WTC11 (cell line): ENCODE measurements at regions of chr2 and their contacts with region 1.

Region 1: DNA sequence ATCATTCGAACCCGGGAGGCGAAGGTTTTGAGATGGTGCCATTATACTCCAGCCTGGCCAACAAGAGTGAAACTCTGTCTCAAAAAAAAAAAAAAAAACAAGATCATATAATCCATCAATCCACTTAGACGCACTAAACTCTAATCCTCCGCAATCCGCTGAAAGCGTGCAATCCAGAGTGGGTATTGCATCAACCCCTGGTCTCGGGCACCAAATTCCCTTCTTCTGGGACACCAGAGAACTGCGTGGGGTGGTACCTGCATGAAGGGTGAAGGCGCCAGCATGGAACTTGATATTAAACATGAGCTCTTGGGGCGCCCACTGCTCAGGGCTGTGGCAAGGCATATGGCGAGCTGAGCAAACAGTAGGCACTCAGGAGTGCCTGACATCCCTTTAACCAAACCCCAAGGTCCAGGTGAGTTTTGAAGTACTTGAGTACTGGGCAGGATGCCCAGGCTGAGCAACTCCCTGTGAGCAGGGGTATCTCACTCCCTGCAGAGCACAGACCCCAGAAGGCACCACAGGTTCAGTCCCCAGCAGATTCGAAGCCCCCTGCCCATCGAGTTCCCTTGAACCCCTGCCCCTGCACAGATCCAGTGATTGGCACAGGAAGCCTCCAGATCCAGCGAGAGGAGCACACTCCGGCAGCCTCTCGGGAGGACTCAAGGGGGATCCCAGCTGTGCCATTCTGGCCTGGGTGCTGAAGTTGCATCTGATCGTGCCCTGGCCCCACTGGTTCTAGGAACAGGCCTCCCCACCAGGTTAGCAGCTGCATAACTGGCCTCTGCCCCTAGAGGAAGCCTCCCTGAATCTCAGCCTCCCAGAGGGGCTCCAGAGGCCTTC is 8.0 kb downstream of the ALPI start:
- DNase-seq: no peak
- ATAC-seq: no peak
- H3K4me3 Mint-ChIP-seq: no peak overlapping the region
- H3K27ac Mint-ChIP-seq: no peak overlapping the region
- H3K4me1 Mint-ChIP-seq: no peaks in the 10 kb centered on the region
- H3K27me3 Mint-ChIP-seq: peaks cover 4% of the 10 kb centered on the region; the same call in 1 of the 2 replicates
- CTCF ChIP-seq: no peak

Region 2: DNA sequence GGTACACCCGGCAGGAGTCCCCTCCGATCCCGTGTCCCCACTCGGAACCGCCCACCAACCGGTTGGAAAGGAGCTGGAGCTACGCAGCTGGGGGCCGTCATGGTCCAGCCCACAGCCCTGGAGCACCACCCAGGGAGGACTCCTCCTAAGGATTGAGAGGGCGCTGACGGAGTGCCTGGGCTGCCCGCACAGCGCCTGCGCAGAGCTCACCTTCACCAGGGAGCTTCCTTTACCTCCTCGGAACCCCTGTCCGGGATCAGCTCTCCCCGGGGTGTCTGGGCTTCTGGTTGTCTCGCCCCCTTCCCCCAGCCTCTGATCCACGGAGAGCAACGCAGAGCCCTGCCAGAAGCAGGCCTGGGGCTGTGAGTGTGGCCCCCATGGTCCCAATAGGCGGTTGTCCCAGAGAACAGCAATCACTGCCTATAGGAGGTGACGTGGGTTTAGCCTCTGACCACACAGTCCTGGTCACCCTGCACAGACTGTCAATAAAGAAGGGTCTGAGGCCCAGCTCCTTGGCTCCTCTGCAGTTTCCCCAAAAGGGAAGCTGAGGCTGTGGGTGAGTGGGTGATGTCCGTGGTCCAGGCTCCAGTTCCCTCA is 42.6 kb before region 1 on chr2:
- CTCF ChIA-PET with region 1: no interaction called
- POLR2A ChIA-PET with region 1: no interaction called
- DNase-seq: peak; percentile 59
- ATAC-seq: peak; percentile 6
- H3K4me3 Mint-ChIP-seq: peak overlapping the region; percentile 61
- H3K27ac Mint-ChIP-seq: no peak overlapping the region
- H3K4me1 Mint-ChIP-seq: peaks cover 52% of the 10 kb centered on the region
- H3K27me3 Mint-ChIP-seq: peaks cover 76% of the 10 kb centered on the region
- CTCF ChIP-seq: no peak

Region 3: DNA sequence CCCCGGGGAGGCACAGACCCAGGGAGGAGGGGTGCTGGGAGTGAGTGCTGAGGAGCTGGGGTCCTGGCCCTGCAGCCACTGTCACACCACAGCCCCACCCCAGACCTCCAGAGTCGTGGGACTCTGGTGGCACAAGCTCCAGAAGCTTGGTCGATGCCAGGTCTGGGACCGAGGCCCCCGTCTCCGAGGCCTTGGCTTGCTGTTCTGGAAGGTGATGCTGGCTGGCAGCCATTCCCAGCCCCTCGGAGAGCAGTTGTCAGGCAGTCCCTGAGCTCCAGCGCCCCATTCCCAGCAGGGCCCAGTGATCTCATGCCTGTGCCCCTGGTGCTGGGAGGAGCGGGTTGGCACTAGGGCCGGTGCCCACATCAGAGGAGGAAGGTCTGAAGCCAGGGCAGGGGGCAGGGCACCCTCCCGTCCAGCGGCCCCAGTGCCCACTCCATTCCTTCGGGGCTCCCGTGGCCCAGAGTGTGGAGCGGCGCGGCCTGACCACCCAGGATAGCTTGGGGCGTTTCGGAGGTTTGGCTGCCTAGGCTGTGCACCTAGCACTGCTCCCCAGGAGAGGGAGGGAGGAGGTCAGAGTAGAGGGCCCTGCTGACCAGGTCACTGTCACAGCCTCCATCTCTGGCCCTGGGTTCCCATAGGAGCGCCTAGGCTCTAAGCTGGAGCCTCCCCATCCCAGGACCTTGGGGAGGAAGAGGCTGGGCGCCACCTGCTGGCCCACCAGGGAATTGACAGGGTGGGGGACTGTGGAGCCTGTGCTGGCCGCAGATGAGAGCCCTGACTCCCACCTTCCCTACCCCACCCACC is 24.8 kb before region 1 on chr2:
- CTCF ChIA-PET with region 1: no interaction called
- POLR2A ChIA-PET with region 1: no interaction called
- DNase-seq: peak; percentile 80
- ATAC-seq: peak; percentile 71
- H3K4me3 Mint-ChIP-seq: no peak overlapping the region
- H3K27ac Mint-ChIP-seq: no peak overlapping the region
- H3K4me1 Mint-ChIP-seq: peaks cover 6% of the 10 kb centered on the region
- H3K27me3 Mint-ChIP-seq: peaks cover 3% of the 10 kb centered on the region; the same call in 1 of the 2 replicates
- CTCF ChIP-seq: peak; percentile 59; the same call in 1 of the 2 replicates

Region 4: GRCh38 chr2:232478571-232479340 is 14.8 kb after region 1 on chr2:
- CTCF ChIA-PET with region 1: interaction called, 13 read pairs
- POLR2A ChIA-PET with region 1: no interaction called
- DNase-seq: no peak
- ATAC-seq: no peak
- H3K4me3 Mint-ChIP-seq: no peak overlapping the region
- H3K27ac Mint-ChIP-seq: no peak overlapping the region
- H3K4me1 Mint-ChIP-seq: peaks cover 4% of the 10 kb centered on the region
- H3K27me3 Mint-ChIP-seq: peaks cover 9% of the 10 kb centered on the region
- CTCF ChIP-seq: no peak